ENCODE measurements at regions of chr2 and their contacts with region 1.

Region 1: DNA sequence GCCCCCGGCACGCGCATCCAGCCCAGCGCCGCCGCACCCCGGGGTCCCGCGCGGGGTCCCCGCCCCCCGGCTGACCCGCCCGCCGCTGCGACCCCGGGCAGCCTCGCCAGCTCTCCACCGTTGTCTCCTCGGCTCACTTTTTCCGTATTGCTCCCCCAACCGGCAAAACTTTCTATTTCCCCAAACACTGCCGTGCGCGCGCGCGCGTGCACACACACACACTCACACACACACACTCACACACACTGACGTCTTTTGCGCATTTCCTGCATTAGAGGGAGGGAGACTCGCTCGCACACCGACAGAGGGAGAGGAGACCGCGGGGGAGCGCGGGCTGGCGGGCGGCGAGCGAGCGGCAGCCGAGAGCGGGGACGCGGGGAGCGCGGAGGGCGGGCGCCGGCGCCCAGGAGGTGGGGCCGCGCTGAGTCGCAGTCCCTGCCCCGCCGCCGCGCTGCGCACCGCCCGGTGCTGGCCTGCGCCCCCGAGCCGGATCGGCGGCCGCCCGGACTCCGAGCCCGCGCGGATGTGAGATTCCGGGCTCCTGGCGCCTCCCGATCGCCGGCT is 542 bp upstream of the PRKCE start:
- DNase-seq: peak; percentile 95
- H3K4me3 Mint-ChIP-seq: peak overlapping the region; percentile 79
- H3K27ac Mint-ChIP-seq: peak overlapping the region; percentile 73
- H3K4me1 Mint-ChIP-seq: peaks cover 16% of the 10 kb centered on the region
- H3K27me3 Mint-ChIP-seq: no peaks in the 10 kb centered on the region
- CTCF ChIP-seq: peak; percentile 8

Region 2: GRCh38 chr2:44740678-44741077 is 910.3 kb before region 1 on chr2:
- CTCF ChIA-PET with region 1: no interaction called
- POLR2A ChIA-PET with region 1: no interaction called
- intact Hi-C with region 1: no loop called
- DNase-seq: peak; percentile 36
- H3K4me3 Mint-ChIP-seq: no peak overlapping the region
- H3K27ac Mint-ChIP-seq: no peak overlapping the region
- H3K4me1 Mint-ChIP-seq: no peaks in the 10 kb centered on the region
- H3K27me3 Mint-ChIP-seq: no peaks in the 10 kb centered on the region
- CTCF ChIP-seq: no peak

Region 3: DNA sequence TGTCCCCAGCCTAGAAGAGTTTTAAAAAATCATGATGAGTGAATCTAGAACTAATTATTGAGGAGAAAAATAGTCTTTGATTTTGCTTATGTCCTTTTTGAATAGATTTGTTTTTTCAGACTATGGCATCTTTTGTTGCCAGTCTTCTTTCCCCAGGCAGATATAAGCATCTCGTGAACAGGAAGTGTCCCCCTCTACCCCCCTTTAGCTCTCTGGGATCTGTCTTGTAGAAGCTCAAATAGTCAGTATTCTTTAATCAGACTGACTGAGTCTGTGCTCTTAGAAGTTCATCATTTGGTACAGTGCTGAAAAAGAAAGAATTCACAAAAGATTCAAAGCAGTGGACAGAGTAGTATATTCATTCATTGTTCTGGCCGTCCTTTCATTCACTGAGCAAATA is 10.9 kb after region 1 on chr2:
- CTCF ChIA-PET with region 1: interaction called, 4 read pairs
- POLR2A ChIA-PET with region 1: interaction called, 10 read pairs
- intact Hi-C with region 1: no loop called
- DNase-seq: no peak
- H3K4me3 Mint-ChIP-seq: no peak overlapping the region
- H3K27ac Mint-ChIP-seq: no peak overlapping the region
- H3K4me1 Mint-ChIP-seq: no peaks in the 10 kb centered on the region
- H3K27me3 Mint-ChIP-seq: no peaks in the 10 kb centered on the region
- CTCF ChIP-seq: no peak

Region 4: GRCh38 chr2:45688479-45689200 is 37.7 kb after region 1 on chr2:
- CTCF ChIA-PET with region 1: interaction called, 4 read pairs
- POLR2A ChIA-PET with region 1: interaction called, 19 read pairs
- intact Hi-C with region 1: loop called (anchors 5 kb)
- DNase-seq: no peak
- H3K4me3 Mint-ChIP-seq: no peak overlapping the region
- H3K27ac Mint-ChIP-seq: no peak overlapping the region
- H3K4me1 Mint-ChIP-seq: peaks cover 9% of the 10 kb centered on the region
- H3K27me3 Mint-ChIP-seq: no peaks in the 10 kb centered on the region
- CTCF ChIP-seq: no peak

Region 5: GRCh38 chr2:45816261-45816660 is 165.3 kb after region 1 on chr2:
- CTCF ChIA-PET with region 1: interaction called, 4 read pairs
- POLR2A ChIA-PET with region 1: interaction called, 17 read pairs
- intact Hi-C with region 1: loop called (anchors 5 kb)
- DNase-seq: peak; percentile 97
- H3K4me3 Mint-ChIP-seq: no peak overlapping the region
- H3K27ac Mint-ChIP-seq: peak overlapping the region; percentile 93
- H3K4me1 Mint-ChIP-seq: peaks cover 71% of the 10 kb centered on the region
- H3K27me3 Mint-ChIP-seq: no peaks in the 10 kb centered on the region
- CTCF ChIP-seq: no peak

Region 6: DNA sequence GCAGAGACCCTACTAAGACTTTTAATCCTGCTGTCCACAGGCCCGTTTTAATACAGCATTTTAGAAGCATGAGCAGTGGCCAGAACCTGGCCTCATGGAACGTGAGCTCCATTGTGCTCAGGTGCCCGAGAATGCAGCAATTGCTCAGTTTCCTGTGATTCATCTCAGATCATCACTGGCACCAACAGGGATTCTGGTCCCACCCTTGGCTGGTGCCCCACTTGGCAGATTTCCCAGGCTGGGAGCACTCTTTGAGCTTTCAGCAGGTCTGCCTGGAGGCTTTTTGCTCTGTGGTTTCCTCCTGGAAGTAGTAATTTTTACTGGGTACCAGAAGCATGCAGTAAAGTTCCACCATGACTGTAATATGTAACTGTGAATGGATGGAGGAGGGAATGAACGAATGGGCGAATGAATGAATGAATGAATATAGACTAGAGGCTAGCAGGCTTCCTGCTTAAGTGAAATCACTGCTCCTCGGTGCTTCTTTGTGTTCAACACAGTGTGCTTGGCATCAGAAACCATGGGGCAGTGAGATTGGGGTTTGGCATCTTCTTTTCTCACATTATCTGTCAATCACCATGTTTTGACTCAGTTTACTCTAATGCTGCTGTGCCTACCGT is 313.4 kb after region 1 on chr2:
- CTCF ChIA-PET with region 1: no interaction called
- POLR2A ChIA-PET with region 1: interaction called, 11 read pairs
- intact Hi-C with region 1: no loop called
- DNase-seq: peak; percentile 100
- H3K4me3 Mint-ChIP-seq: no peak overlapping the region
- H3K27ac Mint-ChIP-seq: peak overlapping the region; percentile 84
- H3K4me1 Mint-ChIP-seq: peaks cover 42% of the 10 kb centered on the region
- H3K27me3 Mint-ChIP-seq: no peaks in the 10 kb centered on the region
- CTCF ChIP-seq: no peak